ENCODE measurements at regions of chr6 and their contacts with region 1.

Region 1: DNA sequence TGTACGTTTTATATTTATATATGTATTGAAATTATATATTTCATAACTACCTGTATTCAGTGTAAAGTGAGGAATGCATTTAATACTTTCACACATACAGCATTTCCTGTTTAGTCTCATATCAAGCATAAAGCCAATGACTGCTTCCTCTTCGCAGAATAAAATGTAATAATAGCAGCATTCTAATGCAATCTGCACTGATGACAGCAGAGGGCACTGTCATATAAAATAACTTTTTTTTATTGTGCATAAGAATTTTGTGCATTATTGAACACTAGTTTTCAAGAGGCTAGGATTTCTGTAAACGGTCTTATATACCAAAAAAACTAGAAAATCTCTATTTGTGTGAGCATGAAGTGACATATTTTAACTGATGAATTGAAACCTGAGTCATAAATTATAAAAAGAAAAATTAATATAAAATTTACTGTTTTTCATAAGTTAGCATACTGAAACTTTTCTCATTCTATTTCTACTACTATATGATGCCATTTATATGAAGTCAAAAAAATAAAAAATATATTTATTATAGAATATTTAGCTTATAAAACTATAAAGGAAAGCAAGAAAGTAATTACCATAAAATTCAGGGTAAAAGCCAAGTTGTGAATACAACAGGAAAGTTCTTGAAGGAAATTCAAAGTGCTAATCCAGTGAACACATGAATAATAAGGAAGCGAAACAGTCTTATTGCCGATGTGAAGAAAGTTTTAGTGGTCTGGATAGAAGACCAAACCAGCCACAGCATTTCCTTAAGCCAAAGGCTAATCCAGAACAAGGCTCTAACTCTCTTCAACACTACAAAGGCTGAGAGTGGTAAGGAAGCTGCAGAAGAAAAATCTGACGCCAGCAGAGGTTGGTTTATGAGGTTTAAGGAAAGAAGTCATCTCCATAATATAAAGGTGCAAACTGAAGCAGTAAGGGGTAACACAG is 36.3 kb downstream of the RNF146 start:
- DNase-seq: peak in 1 of 2 donors; percentile 48
- H3K4me3 ChIP-seq: no peak overlapping the region
- H3K27ac ChIP-seq: no peak overlapping the region
- H3K4me1 ChIP-seq: peaks cover 0 to 22% (median 6%) of the 10 kb centered on the region in 4 donors
- H3K27me3 ChIP-seq: no peaks in the 10 kb centered on the region
- CTCF ChIP-seq: peak; percentile 67 to 74

Region 2: DNA sequence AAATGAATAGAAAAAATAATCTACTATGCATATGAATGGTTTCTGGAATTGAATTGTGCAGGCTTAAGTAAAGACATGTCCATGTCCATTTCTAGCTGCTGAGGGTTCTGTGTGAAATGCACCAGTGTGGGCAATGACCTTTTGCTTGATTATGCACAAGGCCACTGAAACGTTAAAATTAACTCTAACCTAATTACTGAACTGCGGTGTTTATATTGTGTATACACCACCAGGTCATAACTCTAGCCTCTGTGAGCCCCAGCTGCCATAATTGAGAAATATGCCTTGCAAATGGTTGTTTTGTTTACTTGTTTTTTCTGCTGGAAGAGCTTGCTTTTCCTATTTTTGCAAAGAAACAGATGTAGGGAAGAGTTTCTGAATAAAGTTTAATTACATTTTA is 138.4 kb before region 1 on chr6:
- intact Hi-C with region 1: no loop called
- DNase-seq: no peak
- H3K4me3 ChIP-seq: no peak overlapping the region
- H3K27ac ChIP-seq: no peak overlapping the region
- H3K4me1 ChIP-seq: no peaks in the 10 kb centered on the region
- H3K27me3 ChIP-seq: no peaks in the 10 kb centered on the region
- CTCF ChIP-seq: no peak

Region 3: DNA sequence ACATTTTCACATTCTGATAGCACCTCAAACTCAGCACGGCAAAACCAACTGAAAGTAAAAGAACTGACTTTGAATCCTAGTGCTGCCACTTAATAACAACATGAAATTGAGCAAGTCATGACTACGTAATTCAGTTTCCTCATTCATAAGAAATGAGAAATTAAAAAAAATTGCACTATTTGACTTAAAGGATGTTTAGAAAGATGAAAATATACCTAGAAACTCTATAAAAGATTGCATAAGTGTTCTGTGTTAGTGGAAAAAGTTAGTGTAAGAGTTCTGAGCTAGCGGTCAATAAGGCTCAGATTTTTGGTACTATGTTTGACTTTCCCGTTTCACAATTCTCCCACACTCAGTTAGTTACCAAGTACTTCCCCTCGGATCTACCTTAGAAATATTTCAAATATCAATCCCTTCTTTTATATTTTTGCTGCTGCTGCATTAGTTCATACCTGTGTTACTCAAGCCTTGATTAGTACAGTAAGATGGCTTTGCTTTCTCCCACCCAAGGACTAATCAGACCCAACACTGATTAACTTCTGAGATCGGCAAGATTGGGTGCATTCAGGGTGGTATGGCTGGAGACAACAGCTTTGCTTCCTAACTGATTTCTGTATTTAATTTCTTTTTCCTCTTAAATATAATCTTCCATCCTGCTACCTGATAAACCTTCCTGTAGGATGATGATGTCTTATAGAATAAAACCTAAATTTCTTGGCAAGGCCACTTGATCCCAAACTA is 14.6 kb after region 1 on chr6:
- intact Hi-C with region 1: no loop called
- DNase-seq: no peak
- H3K4me3 ChIP-seq: no peak overlapping the region
- H3K27ac ChIP-seq: no peak overlapping the region
- H3K4me1 ChIP-seq: peaks cover 0 to 3% (median 0%) of the 10 kb centered on the region in 4 donors
- H3K27me3 ChIP-seq: no peaks in the 10 kb centered on the region
- CTCF ChIP-seq: no peak

Region 4: GRCh38 chr6:127539272-127539671 is 236.3 kb after region 1 on chr6:
- intact Hi-C with region 1: loop called (anchors 5 kb)
- DNase-seq: no peak
- H3K4me3 ChIP-seq: no peak overlapping the region
- H3K27ac ChIP-seq: no peak overlapping the region
- H3K4me1 ChIP-seq: no peaks in the 10 kb centered on the region
- H3K27me3 ChIP-seq: no peaks in the 10 kb centered on the region
- CTCF ChIP-seq: peak; percentile 41 to 46

Measured in tibial artery (tissue), 4 donors.